CD4-positive, alpha-beta T cell (primary cell): ENCODE measurements at regions of chr19 and their contacts with region 1.

Region 1: DNA sequence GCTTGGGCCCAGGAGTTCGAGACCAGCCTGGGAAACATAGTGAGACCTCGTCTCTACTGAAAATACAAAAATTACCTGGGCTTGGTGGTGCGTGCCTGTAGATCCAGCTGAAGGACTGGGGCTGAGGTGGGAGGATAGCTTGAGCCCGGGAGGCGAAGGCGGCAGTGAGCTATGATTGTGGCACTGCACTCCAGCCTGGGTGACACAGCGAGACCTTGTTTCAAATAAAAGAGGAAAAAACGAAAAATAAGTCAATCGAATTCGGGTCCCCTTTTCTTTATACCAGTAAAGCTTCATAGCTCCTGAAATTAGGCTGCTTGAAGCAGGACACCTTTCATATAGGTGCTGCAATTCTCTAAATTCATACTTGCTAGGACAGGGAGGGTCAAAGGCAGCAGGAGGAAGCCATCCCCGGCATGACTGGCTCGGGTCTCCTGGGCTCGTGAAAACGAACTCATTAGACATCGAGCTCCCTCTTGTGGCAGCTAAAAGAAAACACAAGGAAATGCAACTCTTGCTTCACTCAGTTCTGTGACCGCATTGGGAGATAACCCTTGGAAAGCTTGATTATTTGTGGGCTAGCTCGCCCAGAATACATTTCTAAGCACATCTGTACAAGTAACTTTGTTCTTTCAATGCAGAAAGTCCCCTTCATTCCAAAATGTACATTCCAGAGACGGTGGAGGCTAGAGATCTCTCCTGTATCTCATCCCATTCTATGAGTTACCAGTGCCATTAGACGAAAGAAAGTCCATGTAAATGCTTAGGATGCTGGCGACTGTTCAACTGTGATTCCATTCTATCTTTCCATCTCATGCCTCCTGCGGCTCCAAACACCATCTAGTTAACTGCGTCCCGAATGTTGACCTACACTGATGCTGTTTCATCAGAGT is 16.8 kb downstream of the FPR2 start:
- DNase-seq: peak; percentile 4 to 83 (median 18)
- ATAC-seq: peak; percentile 48
- H3K4me3 ChIP-seq: no peak overlapping the region
- H3K4me3 Mint-ChIP-seq: no peak overlapping the region
- H3K27ac ChIP-seq: no peak overlapping the region
- H3K27ac Mint-ChIP-seq: no peak overlapping the region
- H3K4me1 ChIP-seq: no peaks in the 10 kb centered on the region
- H3K4me1 Mint-ChIP-seq: no peaks in the 10 kb centered on the region
- H3K27me3 ChIP-seq: peaks cover 5 to 9% of the 10 kb centered on the region in 2 experiments
- H3K27me3 Mint-ChIP-seq: peaks cover 87% of the 10 kb centered on the region
- CTCF ChIP-seq: peak; percentile 66

Region 2: GRCh38 chr19:51660975-51661600 is 116.7 kb before region 1 on chr19:
- CTCF ChIA-PET with region 1: interaction called, 4 read pairs
- POLR2A ChIA-PET with region 1: no interaction called
- intact Hi-C with region 1: loop called (anchors 2 to 10 kb)
- DNase-seq: peak in 11 of 14 experiments; percentile 17 to 75 (median 29)
- ATAC-seq: no peak
- H3K4me3 ChIP-seq: no peak overlapping the region
- H3K4me3 Mint-ChIP-seq: no peak overlapping the region
- H3K27ac ChIP-seq: no peak overlapping the region
- H3K27ac Mint-ChIP-seq: no peak overlapping the region
- H3K4me1 ChIP-seq: peaks cover 3% of the 10 kb centered on the region
- H3K4me1 Mint-ChIP-seq: peaks cover 4% of the 10 kb centered on the region
- H3K27me3 ChIP-seq: peaks cover 0 to 15% of the 10 kb centered on the region in 2 experiments
- H3K27me3 Mint-ChIP-seq: peaks cover 46% of the 10 kb centered on the region
- CTCF ChIP-seq: no peak

Region 3: DNA sequence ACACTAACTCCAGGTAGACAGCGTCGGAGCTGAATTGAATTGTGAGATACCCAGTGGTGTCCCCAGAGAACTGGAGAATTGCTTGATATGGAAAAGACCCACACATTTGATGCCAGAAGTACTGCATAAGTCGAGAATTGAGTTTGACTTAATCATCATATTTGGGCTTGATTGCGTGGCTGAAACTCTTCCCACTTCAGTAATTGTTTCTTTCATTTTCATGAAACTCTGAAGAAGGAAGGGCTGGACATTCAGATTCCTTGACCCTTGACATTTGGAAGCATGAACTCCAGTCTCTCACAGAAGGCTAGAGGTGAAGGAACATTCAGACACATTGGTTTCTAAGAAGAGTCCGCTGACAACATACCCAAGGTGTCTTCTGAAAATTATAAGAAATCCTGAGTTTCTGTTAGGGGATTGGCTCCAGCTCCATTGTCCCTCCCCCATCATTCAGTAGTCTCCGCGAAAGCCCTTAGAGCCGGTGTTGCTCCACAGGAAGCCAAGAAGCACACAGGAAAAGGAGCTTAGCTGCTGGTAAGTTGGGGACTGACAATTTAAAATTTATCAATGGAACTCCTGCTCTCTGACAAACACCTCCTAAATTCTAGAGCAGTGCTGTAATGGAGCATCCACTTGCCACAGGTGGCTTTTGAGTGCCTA is 17.0 kb before region 1 on chr19 and contains the start of gene FPR2:
- CTCF ChIA-PET with region 1: no interaction called
- POLR2A ChIA-PET with region 1: no interaction called
- intact Hi-C with region 1: no loop called
- DNase-seq: no peak
- ATAC-seq: no peak
- H3K4me3 ChIP-seq: no peak within 1 kb of the TSS
- H3K4me3 Mint-ChIP-seq: no peak within 1 kb of the TSS
- H3K27ac ChIP-seq: no peak within 1 kb of the TSS
- H3K27ac Mint-ChIP-seq: no peak within 1 kb of the TSS
- H3K4me1 ChIP-seq: no peaks in the 10 kb centered on the region
- H3K4me1 Mint-ChIP-seq: no peaks in the 10 kb centered on the region
- H3K27me3 ChIP-seq: peaks cover 9 to 14% of the 10 kb centered on the region in 2 experiments
- H3K27me3 Mint-ChIP-seq: peaks cover 43% of the 10 kb centered on the region
- CTCF ChIP-seq: no peak
- total RNA-seq, gene FPR2: not detected